T-cell (primary cell): ENCODE measurements at regions of chr19 and their contacts with region 1.

Region 1: GRCh38 chr19:4400135-4400936 is at the start of gene SH3GL1:
- DNase-seq: peak; percentile 79 to 98 (median 89)
- ATAC-seq: peak; percentile 66 to 74 (median 70)
- H3K4me3 ChIP-seq: peak within 1 kb of the TSS; percentile 85 to 92
- H3K4me3 Mint-ChIP-seq: peak within 1 kb of the TSS; percentile 82 to 89 (median 87)
- H3K27ac ChIP-seq: peak within 1 kb of the TSS; percentile 94
- H3K27ac Mint-ChIP-seq: peak within 1 kb of the TSS; percentile 75 to 92
- H3K4me1 ChIP-seq: peaks cover 23 to 55% of the 10 kb centered on the region in 2 experiments
- H3K4me1 Mint-ChIP-seq: peaks cover 61 to 76% (median 63%) of the 10 kb centered on the region in 3 donors
- H3K27me3 ChIP-seq: no peaks in the 10 kb centered on the region
- H3K27me3 Mint-ChIP-seq: no peaks in the 10 kb centered on the region
- total RNA-seq, gene SH3GL1: 38.8 to 51.5 (median 45.7) TPM

Region 2: GRCh38 chr19:3762501-3763459 is 637.6 kb before region 1 on chr19 and contains the start of gene MRPL54:
- CTCF ChIA-PET with region 1: no interaction called
- POLR2A ChIA-PET with region 1: interaction called in 1 of 2 experiments, 29 read pairs
- DNase-seq: peak; percentile 98 to 100 (median 99)
- ATAC-seq: peak; percentile 86 to 87 (median 87)
- H3K4me3 ChIP-seq: peak within 1 kb of the TSS; percentile 85 to 98
- H3K4me3 Mint-ChIP-seq: peak within 1 kb of the TSS; percentile 97 to 98 (median 97)
- H3K27ac ChIP-seq: peak within 1 kb of the TSS; percentile 98
- H3K27ac Mint-ChIP-seq: peak within 1 kb of the TSS; percentile 100
- H3K4me1 ChIP-seq: peaks cover 15 to 70% of the 10 kb centered on the region in 2 experiments
- H3K4me1 Mint-ChIP-seq: peaks cover 45 to 57% (median 50%) of the 10 kb centered on the region in 3 donors
- H3K27me3 ChIP-seq: no peaks in the 10 kb centered on the region
- H3K27me3 Mint-ChIP-seq: no peaks in the 10 kb centered on the region
- total RNA-seq, gene MRPL54: 46.9 to 77.8 (median 52.2) TPM

Region 3: GRCh38 chr19:4075373-4075772 is 325.0 kb before region 1 on chr19:
- CTCF ChIA-PET with region 1: no interaction called
- POLR2A ChIA-PET with region 1: interaction called in 1 of 2 experiments, 14 read pairs
- DNase-seq: no peak
- ATAC-seq: no peak
- H3K4me3 ChIP-seq: no peak overlapping the region
- H3K4me3 Mint-ChIP-seq: peak overlapping the region in 1 of 3 donors; percentile 36
- H3K27ac ChIP-seq: no peak overlapping the region
- H3K27ac Mint-ChIP-seq: peak overlapping the region in 1 of 2 donors; percentile 25
- H3K4me1 ChIP-seq: peaks cover 16 to 39% of the 10 kb centered on the region in 2 experiments
- H3K4me1 Mint-ChIP-seq: peaks cover 10 to 36% (median 21%) of the 10 kb centered on the region in 3 donors
- H3K27me3 ChIP-seq: no peaks in the 10 kb centered on the region
- H3K27me3 Mint-ChIP-seq: no peaks in the 10 kb centered on the region

Region 4: DNA sequence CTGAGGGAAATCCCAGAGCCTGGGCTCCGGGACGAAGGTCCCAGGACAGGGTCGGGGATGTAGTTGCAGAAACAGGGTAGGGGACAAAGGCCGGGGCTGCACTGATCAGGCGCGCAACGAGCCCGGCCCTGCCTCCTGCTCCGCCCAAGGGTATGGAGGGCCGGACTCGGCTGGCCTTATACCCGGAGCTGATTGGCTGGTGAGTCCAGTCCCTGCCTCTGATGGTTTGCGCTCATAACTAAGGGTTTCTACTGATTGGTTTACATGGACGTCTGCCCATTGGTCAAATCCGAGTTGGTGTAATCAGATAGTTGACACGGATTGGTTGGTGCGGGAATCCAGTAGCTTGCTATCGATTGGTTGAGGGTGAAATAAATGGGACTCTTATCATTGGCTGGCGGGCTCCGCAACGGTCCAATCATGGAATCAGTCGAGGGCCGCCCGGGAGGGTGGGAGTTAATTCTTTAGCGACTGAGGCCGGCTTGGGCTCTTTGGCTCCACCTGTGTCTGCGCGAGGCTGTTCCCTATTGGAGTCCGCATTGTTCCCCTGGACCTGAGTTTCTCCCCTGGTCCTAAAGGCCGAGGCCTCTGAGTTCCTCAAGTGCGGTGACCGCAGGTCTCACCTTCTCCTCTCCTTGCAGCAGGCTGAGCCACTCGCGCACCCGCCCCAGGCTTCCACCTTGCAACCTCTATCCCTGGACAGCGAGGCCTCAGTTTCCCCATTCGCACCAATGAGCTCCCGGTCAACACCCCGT is 57.5 kb before region 1 on chr19:
- CTCF ChIA-PET with region 1: interaction called, 3 to 18 read pairs
- POLR2A ChIA-PET with region 1: interaction called in 1 of 2 experiments, 4 read pairs
- DNase-seq: peak; percentile 81 to 97 (median 91)
- ATAC-seq: peak; percentile 79 to 81 (median 81)
- H3K4me3 ChIP-seq: peak overlapping the region; percentile 73 to 96
- H3K4me3 Mint-ChIP-seq: peak overlapping the region; percentile 84 to 90 (median 89)
- H3K27ac ChIP-seq: peak overlapping the region; percentile 86
- H3K27ac Mint-ChIP-seq: peak overlapping the region; percentile 84 to 94
- H3K4me1 ChIP-seq: peaks cover 8 to 46% of the 10 kb centered on the region in 2 experiments
- H3K4me1 Mint-ChIP-seq: peaks cover 30 to 41% (median 40%) of the 10 kb centered on the region in 3 donors
- H3K27me3 ChIP-seq: no peaks in the 10 kb centered on the region
- H3K27me3 Mint-ChIP-seq: no peaks in the 10 kb centered on the region

Region 5: GRCh38 chr19:4471403-4472173 is 71.3 kb after region 1 on chr19:
- CTCF ChIA-PET with region 1: interaction called in 1 of 2 experiments, 6 read pairs
- POLR2A ChIA-PET with region 1: interaction called in 1 of 2 experiments, 16 read pairs
- DNase-seq: peak; percentile 86 to 100 (median 98)
- ATAC-seq: peak; percentile 84 to 86 (median 84)
- H3K4me3 ChIP-seq: peak overlapping the region; percentile 76 to 84
- H3K4me3 Mint-ChIP-seq: no peak overlapping the region
- H3K27ac ChIP-seq: peak overlapping the region; percentile 83
- H3K27ac Mint-ChIP-seq: no peak overlapping the region
- H3K4me1 ChIP-seq: peaks cover 15 to 38% of the 10 kb centered on the region in 2 experiments
- H3K4me1 Mint-ChIP-seq: peaks cover 23 to 25% (median 24%) of the 10 kb centered on the region in 3 donors
- H3K27me3 ChIP-seq: no peaks in the 10 kb centered on the region
- H3K27me3 Mint-ChIP-seq: no peaks in the 10 kb centered on the region